Activated CD8-positive, alpha-beta T cell treated with anti-CD3 and anti-CD28 coated beads for 36 hours (primary cell): ENCODE measurements at regions of chr19 and their contacts with region 1.

Region 1: GRCh38 chr19:19554074-19555023 is 16.3 kb downstream of the CILP2 start:
- DNase-seq: peak; percentile 76
- ATAC-seq: peak; percentile 80
- H3K4me3 Mint-ChIP-seq: no peak overlapping the region
- H3K27ac Mint-ChIP-seq: no peak overlapping the region
- H3K4me1 Mint-ChIP-seq: no peaks in the 10 kb centered on the region
- H3K27me3 Mint-ChIP-seq: no peaks in the 10 kb centered on the region
- CTCF ChIP-seq: peak; percentile 94

Region 2: DNA sequence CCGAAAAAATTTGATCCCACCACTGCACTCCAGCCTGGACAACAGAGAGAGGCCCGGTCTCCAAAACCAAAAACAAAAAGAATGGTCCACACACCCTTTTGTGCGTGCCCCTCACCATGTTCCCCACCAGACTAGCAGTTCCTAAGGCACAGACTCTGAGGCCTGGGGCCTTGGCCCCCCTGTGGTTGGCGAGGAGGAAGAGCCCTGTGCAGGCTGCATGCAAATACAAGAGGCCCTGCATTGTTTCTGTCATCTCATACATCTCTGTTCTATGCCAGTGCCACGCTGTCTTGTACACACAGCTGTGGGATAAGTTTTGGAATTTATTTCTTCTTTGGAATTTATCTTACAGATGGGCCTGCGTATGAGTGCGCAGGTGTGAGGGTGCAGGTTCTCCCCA is 30.3 kb before region 1 on chr19:
- CTCF ChIA-PET with region 1: interaction called, 10 read pairs
- POLR2A ChIA-PET with region 1: no interaction called
- intact Hi-C with region 1: no loop called
- DNase-seq: no peak
- ATAC-seq: no peak
- H3K4me3 Mint-ChIP-seq: no peak overlapping the region
- H3K27ac Mint-ChIP-seq: no peak overlapping the region
- H3K4me1 Mint-ChIP-seq: peaks cover 31% of the 10 kb centered on the region
- H3K27me3 Mint-ChIP-seq: no peaks in the 10 kb centered on the region
- CTCF ChIP-seq: no peak

Region 3: DNA sequence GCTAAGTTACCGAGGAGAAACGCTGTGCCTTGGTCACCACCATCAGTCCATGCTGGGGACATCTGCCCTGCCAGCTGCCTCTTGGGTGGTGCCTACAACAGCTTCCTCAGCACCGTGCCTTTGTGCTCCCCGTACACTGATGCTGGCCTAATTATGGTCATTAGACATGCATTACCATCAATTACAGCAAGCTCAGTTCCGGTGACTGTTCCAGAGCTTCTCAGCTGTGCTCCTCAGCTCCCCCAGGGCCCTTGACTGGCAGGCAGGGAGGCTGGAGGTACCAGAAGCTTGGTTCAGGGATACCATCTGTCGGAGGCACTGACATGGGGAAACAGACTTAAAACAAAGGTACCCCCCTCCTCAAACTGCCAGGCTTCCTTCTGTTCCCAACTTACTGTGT is 23.9 kb after region 1 on chr19:
- CTCF ChIA-PET with region 1: interaction called, 30 read pairs
- POLR2A ChIA-PET with region 1: no interaction called
- intact Hi-C with region 1: no loop called
- DNase-seq: no peak
- ATAC-seq: no peak
- H3K4me3 Mint-ChIP-seq: no peak overlapping the region
- H3K27ac Mint-ChIP-seq: no peak overlapping the region
- H3K4me1 Mint-ChIP-seq: peaks cover 3% of the 10 kb centered on the region
- H3K27me3 Mint-ChIP-seq: no peaks in the 10 kb centered on the region
- CTCF ChIP-seq: no peak

Region 4: DNA sequence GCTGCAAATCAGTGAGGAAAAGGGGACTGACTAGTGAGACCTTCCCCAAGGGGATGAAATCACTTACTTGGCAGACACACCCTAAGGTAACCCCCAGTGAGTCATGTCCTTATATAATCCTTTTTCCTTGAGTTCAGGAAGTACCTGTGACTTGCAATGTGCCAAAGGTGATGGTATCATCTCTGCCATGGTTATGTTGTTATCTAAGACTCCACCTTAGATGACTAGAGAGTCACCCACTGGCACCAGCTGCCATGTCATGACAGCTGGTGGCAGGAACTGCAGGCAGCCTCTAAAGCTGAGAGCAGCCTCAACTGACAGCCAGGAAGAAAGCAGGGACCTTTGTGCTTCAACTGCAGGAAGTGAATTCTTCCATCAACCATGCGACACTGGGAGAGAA is 51.7 kb after region 1 on chr19:
- CTCF ChIA-PET with region 1: interaction called, 16 read pairs
- POLR2A ChIA-PET with region 1: no interaction called
- intact Hi-C with region 1: no loop called
- DNase-seq: peak; percentile 66
- ATAC-seq: peak; percentile 75
- H3K4me3 Mint-ChIP-seq: no peak overlapping the region
- H3K27ac Mint-ChIP-seq: peak overlapping the region; percentile 83
- H3K4me1 Mint-ChIP-seq: peaks cover 52% of the 10 kb centered on the region
- H3K27me3 Mint-ChIP-seq: no peaks in the 10 kb centered on the region
- CTCF ChIP-seq: no peak

Region 5: GRCh38 chr19:19643158-19644053 is 89.1 kb after region 1 on chr19 and contains the start of gene GMIP:
- CTCF ChIA-PET with region 1: interaction called, 12 read pairs
- POLR2A ChIA-PET with region 1: no interaction called
- intact Hi-C with region 1: no loop called
- DNase-seq: peak; percentile 93
- ATAC-seq: peak; percentile 88
- H3K4me3 Mint-ChIP-seq: peak within 1 kb of the TSS; percentile 96
- H3K27ac Mint-ChIP-seq: peak within 1 kb of the TSS; percentile 98
- H3K4me1 Mint-ChIP-seq: peaks cover 9% of the 10 kb centered on the region
- H3K27me3 Mint-ChIP-seq: no peaks in the 10 kb centered on the region
- CTCF ChIP-seq: peak; percentile 90
- total RNA-seq, gene GMIP: 57.3 to 59.9 TPM